ENCODE measurements at regions of chr15 and their contacts with region 1.

Region 1: DNA sequence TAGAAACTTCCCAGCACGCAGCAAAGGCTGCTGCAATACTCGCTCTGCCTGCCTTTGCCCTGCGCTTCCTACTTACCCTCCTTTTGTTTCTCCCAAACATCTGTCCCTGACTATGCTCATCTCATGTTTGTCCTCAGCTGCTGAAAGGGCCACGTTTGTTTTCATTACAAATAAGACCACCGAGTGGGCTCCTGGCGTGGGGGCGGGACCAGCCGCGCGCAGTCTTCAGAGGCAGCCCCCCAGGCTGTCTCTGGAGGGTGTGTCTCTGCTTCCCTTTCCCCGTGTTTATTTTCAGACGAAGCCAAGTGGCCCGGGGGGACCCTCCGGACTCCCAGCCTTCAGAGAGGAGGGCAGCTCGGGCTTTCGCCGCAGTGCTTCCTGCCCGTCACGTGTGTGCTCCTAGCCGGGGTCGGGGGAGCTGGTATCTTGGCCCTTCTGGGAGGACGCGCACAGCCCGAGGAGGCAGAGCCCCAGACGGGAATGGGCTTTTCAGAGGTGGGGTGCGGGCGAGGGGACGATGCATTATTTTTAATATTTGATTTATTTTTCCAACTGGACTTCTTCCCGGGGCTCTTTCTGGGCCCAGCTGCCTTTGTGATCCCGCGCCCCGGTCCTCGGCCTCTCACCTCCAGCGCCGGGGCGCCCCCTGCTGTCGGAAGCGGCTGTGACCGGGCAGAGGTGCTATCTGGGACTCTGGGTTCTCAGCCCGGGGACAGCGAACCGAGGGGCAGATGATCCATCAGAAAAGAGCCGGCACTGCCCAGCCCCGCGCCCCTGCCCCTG is 70.0 kb upstream of the CGNL1 start:
- DNase-seq: peak; percentile 86 to 94 (median 87)
- ATAC-seq: peak; percentile 64 to 92 (median 88)
- H3K4me3 ChIP-seq: peak overlapping the region; percentile 33 to 84 (median 63)
- H3K27ac ChIP-seq: peak overlapping the region in 7 of 12 donors; percentile 4 to 63 (median 30)
- H3K4me1 ChIP-seq: peaks cover 0 to 17% (median 8%) of the 10 kb centered on the region in 12 donors
- H3K27me3 ChIP-seq: no peaks in the 10 kb centered on the region
- CTCF ChIP-seq: peak; percentile 86 to 94 (median 90)
- POLR2A ChIP-seq: no peak

Region 2: GRCh38 chr15:56496635-56497034 is 809.7 kb before region 1 on chr15:
- intact Hi-C with region 1: loop called in 9 of 10 experiments (anchors 2 to 10 kb)
- DNase-seq: no peak
- ATAC-seq: peak in 3 of 4 donors; percentile 73 to 89 (median 88)
- H3K4me3 ChIP-seq: no peak overlapping the region
- H3K27ac ChIP-seq: no peak overlapping the region
- H3K4me1 ChIP-seq: no peaks in the 10 kb centered on the region
- H3K27me3 ChIP-seq: no peaks in the 10 kb centered on the region
- CTCF ChIP-seq: peak; percentile 54 to 85 (median 72)
- POLR2A ChIP-seq: no peak

Region 3: DNA sequence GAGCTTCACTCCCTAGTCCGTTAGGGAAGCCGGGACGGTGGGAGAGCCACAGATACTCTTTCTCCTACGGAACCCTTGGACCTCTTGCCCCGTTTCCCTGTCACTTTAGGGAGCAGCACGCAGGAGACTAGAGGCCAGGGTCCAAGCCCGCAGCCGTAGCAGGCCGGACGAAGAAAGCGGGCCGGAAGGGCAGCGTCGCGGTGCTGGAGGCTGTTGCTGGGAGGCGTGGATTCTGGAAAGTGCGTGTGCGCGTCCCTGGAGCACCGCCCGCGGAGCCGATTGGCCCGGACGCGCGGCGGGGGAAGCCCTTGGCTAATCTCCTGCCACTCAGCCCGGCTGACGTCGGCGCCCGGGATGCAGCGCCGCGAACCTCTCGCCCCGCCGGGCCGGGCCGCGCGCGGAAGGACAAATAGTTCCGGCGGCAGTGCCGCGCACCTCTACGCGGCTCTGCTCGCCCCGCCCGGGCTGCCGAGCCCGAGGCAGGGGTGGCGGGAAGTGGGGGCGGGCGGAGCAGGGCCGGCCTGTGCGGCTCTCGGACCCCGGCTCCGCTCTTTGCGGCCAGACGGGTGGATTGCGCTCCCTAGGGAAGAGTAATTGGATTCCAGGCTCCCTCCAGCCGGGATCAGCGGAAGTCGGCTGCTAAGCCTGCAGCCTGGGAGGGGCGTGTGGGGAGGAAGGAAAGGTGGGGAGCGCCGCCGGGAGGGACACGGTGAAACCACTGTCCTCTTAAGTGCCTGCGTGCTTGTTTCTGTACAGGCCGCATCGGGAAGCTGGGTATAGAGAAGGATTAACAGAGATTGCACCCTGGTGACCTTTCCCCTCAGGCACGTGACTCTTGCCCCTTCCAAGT is 419.2 kb before region 1 on chr15:
- intact Hi-C with region 1: loop called in 1 of 10 experiments (anchors 10 kb)
- DNase-seq: peak; percentile 96 to 97 (median 97)
- ATAC-seq: peak; percentile 98 to 99 (median 98)
- H3K4me3 ChIP-seq: peak overlapping the region; percentile 47 to 86 (median 71)
- H3K27ac ChIP-seq: peak overlapping the region; percentile 95 to 99 (median 98)
- H3K4me1 ChIP-seq: peaks cover 0 to 32% (median 17%) of the 10 kb centered on the region in 12 donors
- H3K27me3 ChIP-seq: no peaks in the 10 kb centered on the region
- CTCF ChIP-seq: peak in 3 of 12 donors; percentile 12 to 33 (median 28)
- POLR2A ChIP-seq: peak in 1 of 2 donors; percentile 75

Region 4: GRCh38 chr15:57146506-57147201 is 159.7 kb before region 1 on chr15:
- intact Hi-C with region 1: loop called (anchors 1 to 5 kb)
- DNase-seq: peak in 1 of 5 donors; percentile 27
- ATAC-seq: peak in 2 of 4 donors; percentile 32 to 56
- H3K4me3 ChIP-seq: peak overlapping the region in 10 of 12 donors; percentile 4 to 45 (median 30)
- H3K27ac ChIP-seq: peak overlapping the region in 10 of 12 donors; percentile 2 to 67 (median 39)
- H3K4me1 ChIP-seq: peaks cover 3 to 60% (median 40%) of the 10 kb centered on the region in 12 donors
- H3K27me3 ChIP-seq: no peaks in the 10 kb centered on the region
- CTCF ChIP-seq: peak; percentile 62 to 86 (median 80)
- POLR2A ChIP-seq: no peak

Region 5: GRCh38 chr15:57152666-57153539 is 153.4 kb before region 1 on chr15:
- intact Hi-C with region 1: loop called in 5 of 10 experiments (anchors 2 to 5 kb)
- DNase-seq: no peak
- ATAC-seq: peak in 1 of 4 donors; percentile 20
- H3K4me3 ChIP-seq: no peak overlapping the region
- H3K27ac ChIP-seq: peak overlapping the region in 3 of 12 donors; percentile 4 to 47 (median 16)
- H3K4me1 ChIP-seq: peaks cover 3 to 65% (median 41%) of the 10 kb centered on the region in 12 donors
- H3K27me3 ChIP-seq: no peaks in the 10 kb centered on the region
- CTCF ChIP-seq: no peak
- POLR2A ChIP-seq: no peak

Region 6: GRCh38 chr15:57213862-57214261 is 92.5 kb before region 1 on chr15:
- intact Hi-C with region 1: loop called in 2 of 10 experiments (anchors 5 kb)
- DNase-seq: no peak
- ATAC-seq: peak; percentile 47 to 68 (median 60)
- H3K4me3 ChIP-seq: no peak overlapping the region
- H3K27ac ChIP-seq: no peak overlapping the region
- H3K4me1 ChIP-seq: peaks cover 0 to 67% (median 22%) of the 10 kb centered on the region in 12 donors
- H3K27me3 ChIP-seq: no peaks in the 10 kb centered on the region
- CTCF ChIP-seq: peak; percentile 30 to 73 (median 64)
- POLR2A ChIP-seq: no peak

Region 7: GRCh38 chr15:57218826-57219576 is 87.4 kb before region 1 on chr15:
- intact Hi-C with region 1: loop called in 2 of 10 experiments (anchors 5 kb)
- DNase-seq: no peak
- ATAC-seq: peak in 1 of 4 donors; percentile 35
- H3K4me3 ChIP-seq: peak overlapping the region in 8 of 12 donors; percentile 10 to 45 (median 33)
- H3K27ac ChIP-seq: peak overlapping the region in 5 of 12 donors; percentile 9 to 26 (median 12)
- H3K4me1 ChIP-seq: peaks cover 0 to 66% (median 31%) of the 10 kb centered on the region in 12 donors
- H3K27me3 ChIP-seq: no peaks in the 10 kb centered on the region
- CTCF ChIP-seq: no peak
- POLR2A ChIP-seq: no peak